ENCODE measurements at regions of chr5 and their contacts with region 1.

Region 1: DNA sequence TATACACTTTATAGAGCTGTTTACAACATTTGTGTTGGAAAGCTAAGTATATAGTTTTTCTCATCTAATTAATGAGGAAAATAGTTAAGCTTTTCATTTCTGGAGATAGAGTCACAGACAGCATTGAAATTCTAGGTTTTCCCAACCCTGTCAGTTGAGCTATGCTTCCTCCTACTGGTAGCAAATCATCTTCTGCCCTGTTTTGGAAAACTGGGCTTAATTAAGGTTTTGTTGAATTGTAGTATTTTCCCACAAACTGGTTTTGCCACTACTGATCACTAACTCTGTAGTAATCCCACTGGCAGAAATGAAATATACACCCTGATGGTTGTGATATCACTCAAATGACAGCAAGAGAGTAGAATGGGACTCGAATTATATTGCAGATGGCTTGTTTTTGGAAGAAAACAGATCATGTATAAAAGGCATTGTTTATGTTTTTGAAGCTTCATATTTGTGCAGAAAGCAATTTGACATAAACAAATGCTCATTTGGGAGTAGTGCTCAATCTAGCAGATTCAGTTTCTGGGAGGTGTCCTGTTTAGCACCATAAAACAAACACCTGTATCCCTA is 46.6 kb downstream of the CD180 start:
- DNase-seq: no peak
- ATAC-seq: no peak

Region 2: DNA sequence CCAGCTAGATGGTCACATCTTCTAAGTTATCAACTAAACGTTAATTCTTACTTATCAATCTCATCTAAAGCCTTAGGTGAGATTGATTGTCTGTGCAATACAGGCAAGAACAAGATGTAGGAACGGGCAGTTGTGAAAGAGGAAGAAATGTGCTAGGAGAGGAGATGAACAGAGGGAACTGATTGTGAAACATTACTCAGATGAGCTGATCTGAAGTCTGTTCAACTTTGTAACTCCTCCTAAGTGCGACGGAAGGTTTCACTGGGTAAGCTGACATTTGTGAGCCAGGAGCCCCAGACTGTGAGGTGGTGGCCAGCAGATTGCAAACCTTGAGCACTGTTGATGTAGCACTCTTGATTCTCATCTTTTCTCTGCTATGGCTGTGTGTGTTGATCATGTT is 157.5 kb before region 1 on chr5:
- intact Hi-C with region 1: loop called in 1 of 2 experiments (anchors 10 kb)
- DNase-seq: no peak
- ATAC-seq: no peak

Region 3: DNA sequence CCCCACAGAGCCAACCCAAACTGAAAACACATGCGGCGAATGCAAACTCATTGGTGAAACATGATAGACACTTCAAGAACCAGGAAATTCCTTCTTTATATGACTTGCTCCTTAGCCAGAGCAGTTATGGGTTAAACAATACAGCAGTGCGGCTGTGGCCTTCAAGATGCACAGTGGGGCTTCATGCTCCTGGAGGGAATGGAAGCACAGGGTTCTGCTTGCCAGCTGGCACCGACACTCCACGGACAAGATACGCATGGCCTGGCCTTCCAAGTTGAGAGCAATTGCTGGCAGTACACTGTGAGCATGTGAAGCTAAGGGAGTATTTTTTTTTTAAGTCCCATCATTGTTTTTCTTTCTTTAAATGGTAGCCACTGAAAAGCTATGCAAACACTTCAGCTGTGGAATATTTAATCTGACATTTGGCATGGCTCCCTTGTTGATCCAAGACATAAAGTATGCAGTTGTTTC is 498.2 kb after region 1 on chr5:
- intact Hi-C with region 1: no loop called
- DNase-seq: peak; percentile 35 to 83
- ATAC-seq: peak; percentile 70

Measured in left colon (tissue), 2 donors.